Endothelial cell of umbilical vein (primary cell): ENCODE measurements at regions of chr17 and their contacts with region 1.

Region 1: DNA sequence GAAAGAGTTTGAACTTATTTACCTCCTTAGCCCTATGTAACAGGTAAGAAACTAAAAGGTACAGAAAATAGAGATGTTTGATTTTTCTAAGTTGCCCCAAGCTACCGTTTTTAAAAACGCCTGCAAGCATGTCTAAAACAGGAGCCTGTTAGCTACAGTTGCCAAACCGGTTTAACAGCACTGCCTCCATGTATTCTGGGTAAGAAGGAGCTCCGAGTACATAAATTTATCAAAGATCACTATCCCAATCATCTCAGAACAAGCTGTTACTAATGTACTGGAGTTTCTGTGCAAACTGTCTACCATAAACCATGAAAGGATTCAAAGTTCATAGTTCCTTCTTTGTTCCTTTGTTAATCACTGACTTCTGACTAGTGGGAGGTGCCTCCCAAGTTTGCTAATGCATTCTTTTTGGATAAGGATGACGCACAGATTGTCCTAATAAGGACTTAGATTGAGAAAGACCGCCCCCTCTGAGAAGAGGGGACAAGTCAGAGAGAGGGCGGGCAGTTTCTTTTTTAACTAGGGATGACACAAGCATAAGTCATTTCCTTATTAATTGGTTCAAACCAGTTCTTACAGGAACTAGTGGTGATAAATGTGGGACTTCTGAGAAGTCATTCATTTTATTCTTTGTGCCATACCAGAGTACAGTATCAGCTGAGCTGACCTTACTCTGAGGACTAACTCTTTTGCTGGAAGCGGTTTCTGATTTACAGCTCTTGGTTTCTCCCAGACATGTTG is 55.3 kb downstream of the TUBD1 start:
- DNase-seq: peak; percentile 99
- H3K4me3 ChIP-seq: peak overlapping the region; percentile 76 to 100 (median 99)
- H3K27ac ChIP-seq: peak overlapping the region; percentile 100
- H3K4me1 ChIP-seq: peaks cover 13% of the 10 kb centered on the region
- H3K27me3 ChIP-seq: no peaks in the 10 kb centered on the region
- CTCF ChIP-seq: no peak
- POLR2A ChIP-seq: peak; percentile 100

Region 2: GRCh38 chr17:59762513-59763374 is 74.7 kb before region 1 on chr17:
- CTCF ChIA-PET with region 1: interaction called, 11 read pairs
- POLR2A ChIA-PET with region 1: interaction called, 18 read pairs
- dilution Hi-C with region 1: no loop called
- intact Hi-C with region 1: no loop called
- DNase-seq: peak; percentile 83
- H3K4me3 ChIP-seq: no peak overlapping the region
- H3K27ac ChIP-seq: peak overlapping the region; percentile 78
- H3K4me1 ChIP-seq: peaks cover 61% of the 10 kb centered on the region
- H3K27me3 ChIP-seq: no peaks in the 10 kb centered on the region
- CTCF ChIP-seq: no peak
- POLR2A ChIP-seq: no peak

Region 3: GRCh38 chr17:59769891-59770290 is 67.6 kb before region 1 on chr17:
- CTCF ChIA-PET with region 1: no interaction called
- POLR2A ChIA-PET with region 1: interaction called, 27 read pairs
- dilution Hi-C with region 1: no loop called
- intact Hi-C with region 1: loop called (anchors 1 kb)
- DNase-seq: peak; percentile 89
- H3K4me3 ChIP-seq: peak overlapping the region in 1 of 3 experiments; percentile 11
- H3K27ac ChIP-seq: peak overlapping the region; percentile 98
- H3K4me1 ChIP-seq: peaks cover 53% of the 10 kb centered on the region
- H3K27me3 ChIP-seq: no peaks in the 10 kb centered on the region
- CTCF ChIP-seq: no peak
- POLR2A ChIP-seq: no peak

Region 4: GRCh38 chr17:59791603-59792457 is 45.6 kb before region 1 on chr17:
- CTCF ChIA-PET with region 1: interaction called, 6 read pairs
- POLR2A ChIA-PET with region 1: interaction called, 45 read pairs
- dilution Hi-C with region 1: no loop called
- intact Hi-C with region 1: loop called (anchors 1 kb)
- DNase-seq: peak; percentile 85
- H3K4me3 ChIP-seq: no peak overlapping the region
- H3K27ac ChIP-seq: peak overlapping the region; percentile 94
- H3K4me1 ChIP-seq: peaks cover 37% of the 10 kb centered on the region
- H3K27me3 ChIP-seq: no peaks in the 10 kb centered on the region
- CTCF ChIP-seq: no peak
- POLR2A ChIP-seq: no peak